BJ (cell line): ENCODE measurements at regions of chr5 and their contacts with region 1.

Region 1: DNA sequence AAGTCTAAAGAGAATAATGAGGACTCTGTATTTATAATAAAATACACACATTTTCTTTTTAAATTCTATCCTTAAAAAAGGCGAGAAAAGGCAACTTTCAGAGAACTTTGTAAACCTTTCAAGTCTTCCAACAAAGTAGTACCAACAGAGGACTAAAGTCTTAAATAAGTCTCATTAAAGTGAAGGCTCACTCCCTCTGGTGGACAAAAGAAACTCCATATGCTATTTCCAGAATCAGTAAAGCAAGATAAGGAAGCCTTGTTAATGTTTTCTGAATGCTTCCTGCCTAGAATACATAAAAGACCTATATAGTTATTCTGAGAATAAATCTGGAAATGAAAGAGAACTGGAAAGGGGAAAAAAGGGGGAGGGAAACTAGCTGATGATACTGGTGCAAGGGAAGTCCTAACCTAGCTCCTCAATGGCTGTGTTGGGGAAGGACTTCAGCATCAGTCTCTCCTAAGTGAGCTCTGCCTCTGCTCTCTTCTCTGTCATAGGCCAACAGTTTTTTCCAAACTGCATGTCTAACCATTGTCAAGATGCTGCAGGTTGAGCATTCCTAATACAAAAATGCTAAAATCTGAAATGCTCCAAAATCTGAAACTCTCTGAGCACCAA is 7.2 kb downstream of the HMGCS1 start:
- DNase-seq: no peak
- H3K4me3 ChIP-seq: no peak overlapping the region
- H3K27me3 ChIP-seq: no peaks in the 10 kb centered on the region
- CTCF ChIP-seq: peak; percentile 73

Region 2: GRCh38 chr5:43227655-43228054 is 78.4 kb before region 1 on chr5:
- CTCF ChIA-PET with region 1: interaction called, 20 read pairs
- POLR2A ChIA-PET with region 1: no interaction called
- DNase-seq: no peak
- H3K4me3 ChIP-seq: no peak overlapping the region
- H3K27me3 ChIP-seq: no peaks in the 10 kb centered on the region
- CTCF ChIP-seq: peak; percentile 52